AG04450 (cell line): ENCODE measurements at regions of chr1 and their contacts with region 1.

Region 1: GRCh38 chr1:66752671-66753371 is 562 bp downstream of the DYNLT5 start:
- DNase-seq: no peak
- H3K4me3 ChIP-seq: peak overlapping the region; percentile 54
- H3K27ac ChIP-seq: no peak overlapping the region
- H3K27me3 ChIP-seq: no peaks in the 10 kb centered on the region
- CTCF ChIP-seq: no peak

Region 2: GRCh38 chr1:66764994-66765578 is 12.3 kb after region 1 on chr1:
- CTCF ChIA-PET with region 1: interaction called, 18 read pairs
- POLR2A ChIA-PET with region 1: no interaction called
- DNase-seq: peak; percentile 29
- H3K4me3 ChIP-seq: no peak overlapping the region
- H3K27ac ChIP-seq: no peak overlapping the region
- H3K27me3 ChIP-seq: no peaks in the 10 kb centered on the region
- CTCF ChIP-seq: peak; percentile 78

Region 3: DNA sequence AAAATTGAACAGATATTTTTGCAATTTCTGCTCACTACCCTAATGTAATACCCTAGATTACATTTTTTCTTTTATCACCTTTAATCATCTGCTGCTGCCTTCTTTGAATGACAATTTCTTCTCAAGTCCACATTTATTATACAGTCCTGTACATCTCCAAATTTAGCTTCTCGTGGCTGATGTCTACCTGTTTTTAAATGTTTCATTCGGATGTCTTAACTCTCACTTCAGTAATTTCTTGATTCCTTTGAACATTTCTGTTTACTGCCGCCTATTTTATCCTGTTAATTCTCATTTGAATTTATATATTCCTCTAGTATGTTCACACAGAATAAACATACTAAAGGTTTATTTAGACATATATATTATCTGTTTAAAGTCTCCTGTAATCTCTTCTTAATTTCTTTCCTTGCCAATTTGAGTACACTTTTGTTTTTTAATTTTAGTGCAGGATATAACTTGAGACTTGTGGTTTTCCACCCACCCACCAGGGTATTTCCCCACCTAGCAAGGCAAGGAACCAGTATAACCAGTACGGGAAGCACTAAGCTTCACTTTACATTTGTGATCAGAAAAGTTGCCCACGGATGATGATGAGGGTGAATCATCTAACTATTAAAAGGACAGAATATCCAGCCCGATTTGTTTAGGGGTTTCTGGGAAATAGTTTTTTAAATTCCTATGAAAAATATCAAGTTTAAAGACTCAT is 35.6 kb after region 1 on chr1:
- CTCF ChIA-PET with region 1: no interaction called
- POLR2A ChIA-PET with region 1: no interaction called
- DNase-seq: no peak
- H3K4me3 ChIP-seq: no peak overlapping the region
- H3K27ac ChIP-seq: no peak overlapping the region
- H3K27me3 ChIP-seq: no peaks in the 10 kb centered on the region
- CTCF ChIP-seq: no peak

Region 4: DNA sequence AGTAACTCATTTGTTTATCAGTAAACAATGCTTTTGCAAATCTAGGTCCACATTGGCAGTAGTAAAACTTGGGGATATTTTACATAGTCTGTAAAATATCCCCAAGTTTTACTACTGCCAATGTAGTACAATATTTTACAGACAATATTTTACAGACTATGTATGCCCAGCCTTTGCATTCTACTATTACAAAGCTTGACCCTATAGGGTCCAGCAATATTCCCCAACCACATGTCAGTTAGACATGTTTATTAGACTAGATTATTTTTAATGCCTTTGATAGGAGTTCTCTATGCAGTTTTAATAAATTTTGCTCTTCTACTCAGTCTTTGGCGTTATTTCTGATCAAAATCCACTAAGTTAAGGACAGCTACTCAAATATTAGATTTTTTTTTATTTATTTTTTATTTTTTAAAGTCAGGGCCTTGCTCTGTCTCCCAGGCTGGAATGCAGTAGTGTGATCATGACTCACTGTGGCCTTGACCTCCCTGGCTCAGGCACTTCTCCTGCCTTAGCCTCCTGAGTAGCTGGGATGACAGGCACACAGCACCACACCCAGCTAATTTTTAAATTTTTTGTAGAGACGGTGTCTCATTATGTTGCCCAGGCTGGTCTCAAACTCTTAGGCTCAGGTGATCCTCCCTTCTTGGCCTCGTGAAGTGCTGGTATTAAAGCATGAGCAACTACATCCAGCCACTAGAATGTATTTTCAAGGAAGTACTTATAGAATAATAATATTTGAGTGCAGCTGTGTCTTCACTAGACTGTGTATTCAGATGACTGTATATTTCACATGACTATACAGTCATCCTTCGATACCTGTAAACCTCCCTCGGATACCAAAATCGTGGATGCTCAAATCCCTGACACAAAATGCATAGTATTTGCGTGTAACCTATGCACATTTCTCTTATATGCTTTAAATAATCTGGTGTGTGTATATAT is 191.8 kb after region 1 on chr1:
- CTCF ChIA-PET with region 1: no interaction called
- POLR2A ChIA-PET with region 1: no interaction called
- DNase-seq: peak; percentile 27
- H3K4me3 ChIP-seq: no peak overlapping the region
- H3K27ac ChIP-seq: peak overlapping the region; percentile 22
- H3K27me3 ChIP-seq: no peaks in the 10 kb centered on the region
- CTCF ChIP-seq: no peak